Vagina (tissue), 2 donors: ENCODE measurements at regions of chr22 and their contacts with region 1.

Region 1: DNA sequence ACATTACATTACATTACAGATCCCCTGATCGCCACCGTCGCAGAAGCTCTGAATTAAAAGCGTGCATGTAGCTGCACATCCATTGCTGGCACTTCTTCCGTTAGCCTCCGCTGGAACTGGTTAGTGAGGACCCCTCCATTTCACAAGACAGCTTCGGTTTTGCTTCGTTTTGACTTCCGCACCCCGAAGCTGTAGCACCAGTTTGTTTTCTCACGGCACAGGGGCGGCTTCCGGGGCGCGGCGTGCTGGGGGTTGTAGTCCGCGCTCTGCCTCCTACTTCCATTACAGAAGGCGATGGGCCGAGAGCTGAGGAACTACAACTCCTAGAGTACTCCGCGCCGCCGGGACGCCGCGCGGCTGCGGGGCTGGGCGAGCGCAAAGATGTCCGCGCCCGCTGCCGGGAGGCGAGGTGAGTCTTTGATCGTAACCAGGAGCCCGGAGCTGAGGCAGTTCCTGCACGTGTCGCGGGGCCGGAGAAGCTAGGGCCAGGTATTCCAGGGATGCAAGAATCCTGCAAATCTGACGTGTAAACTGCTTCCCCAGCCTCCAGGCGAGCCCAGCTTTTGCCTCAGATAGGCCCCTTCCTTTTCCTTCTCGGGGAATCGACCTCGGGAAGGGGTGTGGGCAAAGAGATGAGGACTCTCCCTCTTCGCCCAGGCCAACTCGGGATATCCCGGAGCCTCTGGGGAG is at the start of gene PEX26:
- DNase-seq: peak in 1 of 2 donors; percentile 96
- H3K4me3 ChIP-seq: peak within 1 kb of the TSS; percentile 67 to 85
- H3K27ac ChIP-seq: peak within 1 kb of the TSS; percentile 77
- H3K4me1 ChIP-seq: peaks cover 38% of the 10 kb centered on the region
- H3K27me3 ChIP-seq: no peaks in the 10 kb centered on the region
- CTCF ChIP-seq: no peak
- POLR2A ChIP-seq: peak in 1 of 2 donors; percentile 48
- total RNA-seq, gene PEX26: 25.5 TPM

Region 2: GRCh38 chr22:17829695-17830042 is 248.1 kb before region 1 on chr22:
- intact Hi-C with region 1: loop called (anchors 2 kb)
- DNase-seq: no peak
- H3K4me3 ChIP-seq: no peak overlapping the region
- H3K27ac ChIP-seq: no peak overlapping the region
- H3K4me1 ChIP-seq: peaks cover 27% of the 10 kb centered on the region
- H3K27me3 ChIP-seq: no peaks in the 10 kb centered on the region
- CTCF ChIP-seq: no peak
- POLR2A ChIP-seq: no peak

Region 3: DNA sequence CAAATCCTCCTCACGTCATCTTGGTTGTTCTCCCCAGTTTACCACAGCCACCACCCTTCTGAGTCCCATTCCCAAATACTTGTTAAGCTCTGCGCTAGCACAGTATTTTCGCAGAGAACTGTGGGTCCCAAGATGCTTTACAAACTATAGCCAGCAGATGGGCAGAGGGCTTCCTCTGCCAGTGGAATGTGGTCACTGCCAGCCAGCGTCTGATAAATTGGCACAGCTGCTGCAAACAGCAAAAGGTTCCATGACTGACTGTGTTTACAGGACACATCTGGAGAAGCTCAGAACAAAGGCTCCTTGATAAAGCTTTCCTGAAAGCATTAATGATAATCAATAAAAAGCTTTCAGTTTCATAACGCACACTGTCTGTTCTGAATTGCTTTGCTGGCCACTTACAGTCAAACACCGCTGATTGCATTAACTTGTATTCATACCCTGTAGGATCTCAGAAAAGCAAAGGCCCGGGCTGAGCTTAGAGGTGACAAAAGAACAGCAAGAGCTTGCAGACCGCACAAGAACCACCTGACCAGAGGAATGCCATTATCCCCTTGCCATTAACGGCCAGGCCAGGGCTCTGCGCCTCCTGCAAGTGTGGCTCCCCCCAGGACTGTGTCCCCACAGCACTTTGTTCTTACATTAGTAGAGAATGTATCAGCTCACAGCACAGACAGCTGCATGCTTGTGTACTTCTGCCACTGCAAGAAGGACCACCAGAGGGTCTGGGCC is 174.1 kb before region 1 on chr22:
- intact Hi-C with region 1: loop called (anchors 10 kb)
- DNase-seq: no peak
- H3K4me3 ChIP-seq: no peak overlapping the region
- H3K27ac ChIP-seq: no peak overlapping the region
- H3K4me1 ChIP-seq: peaks cover 8% of the 10 kb centered on the region
- H3K27me3 ChIP-seq: no peaks in the 10 kb centered on the region
- CTCF ChIP-seq: no peak
- POLR2A ChIP-seq: no peak

Region 4: DNA sequence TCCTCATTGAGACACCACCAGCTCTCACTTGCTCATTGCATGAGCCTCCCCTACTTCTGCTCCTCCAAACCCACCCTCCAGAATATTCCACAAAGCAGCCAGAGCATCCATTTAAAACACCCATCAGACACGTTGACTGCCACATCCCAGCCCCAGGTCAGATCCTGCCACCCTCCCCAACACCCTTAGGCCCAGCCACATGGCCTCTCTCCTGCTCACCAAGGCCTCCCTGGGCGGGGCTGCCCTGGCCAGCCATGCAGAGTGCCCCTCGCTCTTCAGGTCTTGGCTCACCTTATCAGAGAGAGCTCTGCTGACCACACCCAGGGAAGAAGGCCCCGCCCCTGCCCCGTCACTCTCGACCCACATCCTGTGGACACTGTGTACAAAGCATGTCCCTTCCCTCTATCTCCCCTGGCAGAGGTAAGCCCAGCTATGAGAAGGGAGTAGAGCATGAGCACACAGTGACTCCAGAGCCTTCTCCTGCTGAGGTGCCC is 160.2 kb before region 1 on chr22:
- intact Hi-C with region 1: no loop called
- DNase-seq: no peak
- H3K4me3 ChIP-seq: no peak overlapping the region
- H3K27ac ChIP-seq: no peak overlapping the region
- H3K4me1 ChIP-seq: peaks cover 27% of the 10 kb centered on the region
- H3K27me3 ChIP-seq: no peaks in the 10 kb centered on the region
- CTCF ChIP-seq: no peak
- POLR2A ChIP-seq: no peak

Region 5: GRCh38 chr22:18024276-18024947 is 53.4 kb before region 1 on chr22 and contains the start of gene MICAL3:
- intact Hi-C with region 1: loop called (anchors 5 kb)
- DNase-seq: no peak
- H3K4me3 ChIP-seq: peak within 1 kb of the TSS; percentile 57 to 81
- H3K27ac ChIP-seq: peak within 1 kb of the TSS; percentile 87
- H3K4me1 ChIP-seq: peaks cover 20% of the 10 kb centered on the region
- H3K27me3 ChIP-seq: no peaks in the 10 kb centered on the region
- CTCF ChIP-seq: peak in 1 of 3 experiments; percentile 63
- POLR2A ChIP-seq: no peak
- total RNA-seq, gene MICAL3: 35.1 TPM

Region 6: DNA sequence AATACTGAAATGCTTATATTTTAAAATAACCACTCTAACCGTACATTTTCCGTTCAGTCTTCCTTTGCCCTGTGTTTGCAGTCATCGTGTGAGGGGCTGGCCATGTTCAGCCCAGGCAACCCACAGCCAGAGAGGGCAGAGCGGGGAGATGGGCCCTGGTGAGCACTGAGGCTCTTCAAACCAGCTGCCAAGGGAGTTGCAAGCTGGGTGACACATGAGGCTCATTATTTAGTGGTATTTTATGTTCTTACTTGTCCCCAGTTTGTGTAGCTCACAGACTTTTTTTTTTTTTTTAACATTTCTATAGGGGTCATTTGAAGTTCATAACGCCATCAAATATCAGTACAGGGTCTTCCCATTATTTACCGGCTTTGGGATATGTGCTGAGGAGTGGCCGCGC is 810.3 kb after region 1 on chr22:
- intact Hi-C with region 1: no loop called
- DNase-seq: no peak
- H3K4me3 ChIP-seq: no peak overlapping the region
- H3K27ac ChIP-seq: no peak overlapping the region
- H3K4me1 ChIP-seq: no peaks in the 10 kb centered on the region
- H3K27me3 ChIP-seq: no peaks in the 10 kb centered on the region
- CTCF ChIP-seq: no peak
- POLR2A ChIP-seq: no peak